ENCODE measurements at regions of chr12 and their contacts with region 1.

Region 1: GRCh38 chr12:54411391-54412241 is 7.5 kb downstream of the ITGA5 start:
- DNase-seq: peak; percentile 69
- H3K4me3 Mint-ChIP-seq: peak overlapping the region; percentile 78
- H3K27ac Mint-ChIP-seq: peak overlapping the region; percentile 95
- H3K4me1 Mint-ChIP-seq: peaks cover 71% of the 10 kb centered on the region
- H3K27me3 Mint-ChIP-seq: no peaks in the 10 kb centered on the region

Region 2: GRCh38 chr12:54187069-54187468 is 224.5 kb before region 1 on chr12:
- CTCF ChIA-PET with region 1: no interaction called
- POLR2A ChIA-PET with region 1: no interaction called
- DNase-seq: no peak
- H3K4me3 Mint-ChIP-seq: peak overlapping the region; percentile 76
- H3K27ac Mint-ChIP-seq: no peak overlapping the region
- H3K4me1 Mint-ChIP-seq: peaks cover 28% of the 10 kb centered on the region
- H3K27me3 Mint-ChIP-seq: peaks cover 16% of the 10 kb centered on the region

Region 3: DNA sequence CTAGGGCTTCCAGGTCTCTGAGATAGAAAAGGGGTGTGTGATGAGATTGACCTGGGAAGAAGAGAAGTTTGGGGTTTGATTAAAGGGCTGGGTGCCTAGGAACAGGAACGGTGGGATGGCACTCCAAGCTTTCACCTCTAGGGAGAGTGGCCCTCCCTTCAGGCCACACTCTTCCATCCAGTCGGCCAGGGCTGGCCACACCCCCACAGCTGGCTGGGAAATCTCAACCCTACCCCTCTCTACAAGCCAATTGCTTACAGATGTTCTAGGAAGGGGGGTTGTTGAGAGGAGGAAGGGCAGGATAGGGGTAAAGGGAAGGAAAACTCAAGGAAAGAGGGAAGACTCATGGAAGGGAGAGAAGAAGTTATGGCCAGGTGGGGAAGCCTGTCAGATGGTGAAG is 14.1 kb after region 1 on chr12:
- CTCF ChIA-PET with region 1: interaction called, 10 read pairs
- POLR2A ChIA-PET with region 1: no interaction called
- DNase-seq: no peak
- H3K4me3 Mint-ChIP-seq: no peak overlapping the region
- H3K27ac Mint-ChIP-seq: no peak overlapping the region
- H3K4me1 Mint-ChIP-seq: peaks cover 31% of the 10 kb centered on the region
- H3K27me3 Mint-ChIP-seq: peaks cover 63% of the 10 kb centered on the region

Region 4: DNA sequence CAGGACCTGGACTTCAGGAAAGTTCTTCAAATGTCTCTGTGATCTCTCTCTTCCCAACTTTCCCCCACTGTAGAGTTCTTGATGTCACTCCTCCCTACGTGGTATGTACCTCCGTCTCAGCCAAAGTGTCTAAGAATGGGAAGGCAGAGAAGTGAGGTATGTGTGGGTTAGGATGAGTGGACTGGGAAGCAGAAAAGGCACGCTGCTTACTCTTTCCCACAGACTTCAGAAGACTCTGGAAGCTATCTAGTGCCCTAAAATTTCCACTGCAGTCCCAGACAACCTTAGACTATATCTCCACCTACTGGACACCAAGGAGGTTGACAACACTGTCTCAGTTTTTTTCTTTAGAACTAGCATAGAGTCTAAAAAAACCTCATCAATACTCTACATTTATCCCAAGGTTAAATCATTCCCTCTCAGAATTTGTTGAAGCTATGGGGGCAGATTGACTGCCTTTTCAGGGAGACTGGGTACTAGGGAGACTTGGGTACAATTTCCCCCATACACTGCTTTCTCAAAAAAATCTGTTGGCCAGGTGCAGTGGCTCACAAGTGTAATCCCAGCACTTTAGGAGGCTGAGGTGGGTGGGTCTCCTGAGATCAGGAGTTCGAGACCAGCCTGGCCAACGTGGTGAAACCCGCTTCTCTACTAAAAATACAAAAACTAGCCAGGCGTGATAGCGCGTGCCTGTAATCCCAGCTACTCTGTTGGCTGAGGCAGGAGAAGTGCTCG is 28.1 kb after region 1 on chr12:
- CTCF ChIA-PET with region 1: interaction called, 24 read pairs
- POLR2A ChIA-PET with region 1: no interaction called
- DNase-seq: peak; percentile 17
- H3K4me3 Mint-ChIP-seq: no peak overlapping the region
- H3K27ac Mint-ChIP-seq: no peak overlapping the region
- H3K4me1 Mint-ChIP-seq: peaks cover 7% of the 10 kb centered on the region
- H3K27me3 Mint-ChIP-seq: peaks cover 7% of the 10 kb centered on the region

Region 5: DNA sequence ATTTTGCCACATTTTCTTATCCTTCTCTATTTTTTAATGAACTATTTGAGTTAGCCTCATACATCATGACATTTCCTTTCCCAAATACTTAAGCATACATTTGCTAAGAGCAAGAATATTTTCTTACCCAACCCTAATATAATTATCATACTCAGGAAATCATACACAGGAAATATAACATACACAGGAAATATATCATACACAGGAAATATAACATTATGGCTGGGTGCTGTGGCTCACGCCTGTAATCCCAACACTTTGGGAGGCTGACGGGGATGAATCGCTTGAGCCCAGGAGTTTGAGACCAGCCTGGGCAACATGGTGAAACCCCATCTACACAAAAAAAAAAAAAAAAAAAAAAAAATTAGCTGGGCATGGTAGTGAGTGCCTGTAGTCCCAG is 90.9 kb after region 1 on chr12:
- CTCF ChIA-PET with region 1: no interaction called
- POLR2A ChIA-PET with region 1: no interaction called
- DNase-seq: no peak
- H3K4me3 Mint-ChIP-seq: peak overlapping the region; percentile 64
- H3K27ac Mint-ChIP-seq: peak overlapping the region; percentile 76
- H3K4me1 Mint-ChIP-seq: peaks cover 55% of the 10 kb centered on the region
- H3K27me3 Mint-ChIP-seq: no peaks in the 10 kb centered on the region